ENCODE measurements at regions of chr2 and their contacts with region 1.

Region 1: DNA sequence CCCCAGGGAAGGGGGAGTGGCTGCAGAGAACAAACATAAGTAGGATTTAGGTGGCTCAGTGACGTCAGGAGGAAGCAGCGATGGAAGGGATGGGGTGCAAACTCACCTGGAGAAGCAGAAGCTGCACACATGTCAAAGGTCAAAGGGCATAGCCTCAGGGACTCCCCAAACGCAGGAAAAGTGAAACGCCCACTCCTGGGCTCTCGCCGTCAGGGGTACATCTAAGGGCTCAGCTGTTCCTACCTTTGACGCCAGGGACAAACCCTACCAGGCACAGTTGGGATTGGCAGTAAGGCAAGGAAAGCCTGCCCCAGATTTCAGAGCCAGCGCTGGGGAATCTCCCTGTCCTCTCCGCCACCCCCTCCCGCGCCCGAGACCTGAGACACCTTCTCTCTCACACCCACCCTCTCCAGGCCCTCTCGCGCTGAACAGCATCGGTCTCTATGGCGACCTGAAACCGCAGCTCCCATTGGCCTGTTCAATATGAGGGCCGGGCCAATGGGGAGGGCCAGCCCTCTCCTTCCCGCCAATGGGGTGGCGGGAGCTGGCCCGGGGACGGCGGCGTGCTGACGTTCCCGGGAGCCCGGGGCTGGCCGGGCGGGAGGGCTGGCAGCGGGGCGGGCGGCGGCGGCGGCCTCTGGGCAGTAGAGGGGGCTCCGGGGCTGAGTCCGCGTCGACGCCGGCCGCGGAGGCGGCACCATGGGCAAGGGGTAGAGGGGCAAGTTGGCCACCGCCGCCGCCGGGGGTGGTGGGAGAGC is at the starts of genes CCDC148 and PKP4:
- DNase-seq: no peak
- ATAC-seq: peak; percentile 94
- H3K4me3 ChIP-seq: peak within 1 kb of the TSS; percentile 89 to 93
- H3K27ac ChIP-seq: peak within 1 kb of the TSS; percentile 79
- H3K4me1 ChIP-seq: peaks cover 22% of the 10 kb centered on the region
- H3K27me3 ChIP-seq: no peaks in the 10 kb centered on the region
- CTCF ChIP-seq: peak; percentile 45
- total RNA-seq, gene CCDC148: 0.92 TPM
- total RNA-seq, gene PKP4: 81.7 TPM

Region 2: DNA sequence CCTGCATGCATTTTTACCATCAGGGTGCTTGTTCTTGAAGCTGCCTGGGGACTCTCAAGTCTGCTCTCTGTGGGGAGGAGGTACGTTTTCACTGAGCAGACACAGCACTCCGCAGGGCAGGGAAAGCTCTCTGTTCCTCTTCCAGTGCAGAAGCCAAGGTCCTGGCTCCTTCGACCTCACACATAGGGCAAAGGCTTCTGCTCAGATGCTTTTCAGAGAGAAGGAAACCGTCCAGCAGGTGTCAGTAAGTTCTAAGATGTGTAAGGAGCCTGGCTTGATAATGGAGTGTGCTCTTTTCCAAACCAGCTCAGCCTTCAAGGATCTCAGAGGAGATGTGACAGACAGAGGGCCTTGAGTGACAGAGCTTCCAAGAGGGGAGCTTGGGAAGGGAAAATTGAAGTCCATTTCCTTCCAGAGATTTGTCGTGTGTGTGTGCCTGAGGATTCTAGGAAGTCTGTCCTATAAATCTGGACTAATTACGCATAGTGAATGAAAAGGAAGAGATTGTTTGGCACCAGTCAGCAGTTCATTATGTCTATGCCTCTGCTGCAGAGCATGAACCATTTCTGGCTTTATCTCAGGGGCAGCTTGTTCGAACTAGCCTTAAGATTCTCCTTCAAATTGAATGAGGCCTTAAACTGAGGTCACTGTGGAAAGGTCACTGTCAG is 422.2 kb before region 1 on chr2:
- CTCF ChIA-PET with region 1: no interaction called
- POLR2A ChIA-PET with region 1: no interaction called
- in situ Hi-C with region 1: no loop called
- intact Hi-C with region 1: loop called (anchors 5 kb)
- DNase-seq: peak; percentile 36
- ATAC-seq: peak; percentile 95
- H3K4me3 ChIP-seq: no peak overlapping the region
- H3K27ac ChIP-seq: no peak overlapping the region
- H3K4me1 ChIP-seq: no peaks in the 10 kb centered on the region
- H3K27me3 ChIP-seq: peaks cover 12% of the 10 kb centered on the region
- CTCF ChIP-seq: peak; percentile 67

Region 3: GRCh38 chr2:158391876-158392275 is 64.6 kb before region 1 on chr2:
- CTCF ChIA-PET with region 1: no interaction called
- POLR2A ChIA-PET with region 1: no interaction called
- in situ Hi-C with region 1: no loop called
- intact Hi-C with region 1: no loop called
- DNase-seq: peak; percentile 4
- ATAC-seq: no peak
- H3K4me3 ChIP-seq: no peak overlapping the region
- H3K27ac ChIP-seq: no peak overlapping the region
- H3K4me1 ChIP-seq: no peaks in the 10 kb centered on the region
- H3K27me3 ChIP-seq: no peaks in the 10 kb centered on the region
- CTCF ChIP-seq: no peak

Region 4: DNA sequence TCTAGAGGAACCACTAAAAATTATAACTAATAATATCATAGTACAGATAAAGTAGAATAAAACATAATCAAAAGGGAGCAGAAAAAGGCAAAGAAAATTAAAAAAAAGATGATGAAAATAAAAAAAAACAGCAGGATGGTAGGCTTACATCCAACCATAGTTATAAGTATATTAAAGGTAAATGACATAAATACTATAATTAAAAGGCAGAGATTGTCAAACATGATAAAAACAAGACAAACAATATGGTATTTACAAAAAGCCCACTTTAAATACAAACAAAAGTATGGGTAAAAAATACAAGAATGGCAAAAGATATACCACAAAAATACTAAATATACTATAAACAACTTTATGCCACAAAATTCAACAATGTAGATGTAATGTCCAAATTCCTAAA is 24.4 kb before region 1 on chr2:
- CTCF ChIA-PET with region 1: no interaction called
- POLR2A ChIA-PET with region 1: no interaction called
- in situ Hi-C with region 1: no loop called
- intact Hi-C with region 1: no loop called
- DNase-seq: no peak
- ATAC-seq: no peak
- H3K4me3 ChIP-seq: no peak overlapping the region
- H3K27ac ChIP-seq: no peak overlapping the region
- H3K4me1 ChIP-seq: no peaks in the 10 kb centered on the region
- H3K27me3 ChIP-seq: no peaks in the 10 kb centered on the region
- CTCF ChIP-seq: no peak

Region 5: DNA sequence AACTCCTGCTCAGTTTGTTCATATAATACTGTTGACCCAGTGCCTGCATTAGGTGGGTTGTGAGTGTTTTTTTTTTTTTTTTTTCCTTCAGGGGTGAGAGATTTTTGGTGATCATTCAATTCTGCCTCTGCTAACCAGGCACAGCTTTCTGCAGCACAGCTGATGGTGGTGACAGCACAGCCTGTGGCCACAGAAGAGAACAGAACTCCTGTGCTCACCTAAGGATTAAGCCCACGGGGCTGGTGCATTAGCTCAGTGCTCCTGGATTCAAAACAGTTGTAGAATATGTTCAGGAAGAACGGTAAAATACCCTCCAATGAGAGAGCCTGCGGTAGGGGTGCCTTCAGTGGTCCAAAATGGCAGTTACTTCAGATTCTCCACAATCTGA is 42.3 kb after region 1 on chr2:
- CTCF ChIA-PET with region 1: interaction called, 13 read pairs
- POLR2A ChIA-PET with region 1: no interaction called
- in situ Hi-C with region 1: no loop called
- intact Hi-C with region 1: no loop called
- DNase-seq: no peak
- ATAC-seq: no peak
- H3K4me3 ChIP-seq: no peak overlapping the region
- H3K27ac ChIP-seq: peak overlapping the region; percentile 26; the same call in 1 of the 2 replicates
- H3K4me1 ChIP-seq: peaks cover 65% of the 10 kb centered on the region
- H3K27me3 ChIP-seq: no peaks in the 10 kb centered on the region
- CTCF ChIP-seq: no peak; the same call in 1 of the 2 replicates